ENCODE measurements at regions of chr15 and their contacts with region 1.

Region 1: GRCh38 chr15:101078682-101079323 is 159.6 kb downstream of the LRRK1 start:
- DNase-seq: no peak
- H3K4me3 ChIP-seq: no peak overlapping the region
- H3K27ac ChIP-seq: no peak overlapping the region
- H3K4me1 ChIP-seq: no peaks in the 10 kb centered on the region
- H3K27me3 ChIP-seq: no peaks in the 10 kb centered on the region
- CTCF ChIP-seq: no peak

Region 2: GRCh38 chr15:100438570-100438969 is 640.2 kb before region 1 on chr15:
- CTCF ChIA-PET with region 1: no interaction called
- dilution Hi-C with region 1: loop called (anchors 5 kb)
- in situ Hi-C with region 1: no loop called
- intact Hi-C with region 1: loop called (anchors 10 kb)
- DNase-seq: peak; percentile 58
- H3K4me3 ChIP-seq: no peak overlapping the region
- H3K27ac ChIP-seq: no peak overlapping the region
- H3K4me1 ChIP-seq: no peaks in the 10 kb centered on the region
- H3K27me3 ChIP-seq: no peaks in the 10 kb centered on the region
- CTCF ChIP-seq: no peak

Region 3: DNA sequence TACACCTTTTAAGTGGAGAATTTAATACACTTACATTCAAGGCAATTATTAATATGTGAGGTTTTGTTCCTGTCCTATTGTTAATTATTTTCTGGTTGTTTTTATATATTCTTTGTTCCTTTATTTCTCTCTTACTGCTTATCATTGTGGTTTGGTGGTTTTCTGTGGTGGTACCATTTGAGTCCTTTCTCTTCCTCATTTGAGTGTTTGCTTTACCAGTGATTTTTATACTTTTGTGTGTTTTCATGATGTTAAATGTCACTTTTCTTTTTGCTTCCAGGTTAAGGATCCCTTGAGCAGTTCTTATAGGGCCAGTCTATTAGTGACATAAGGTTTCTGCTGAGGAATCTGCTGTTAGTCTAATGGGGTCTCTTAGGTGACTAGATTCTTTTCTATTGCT is 43.2 kb before region 1 on chr15:
- CTCF ChIA-PET with region 1: no interaction called
- dilution Hi-C with region 1: no loop called
- in situ Hi-C with region 1: no loop called
- intact Hi-C with region 1: no loop called
- DNase-seq: no peak
- H3K4me3 ChIP-seq: no peak overlapping the region
- H3K27ac ChIP-seq: no peak overlapping the region
- H3K4me1 ChIP-seq: no peaks in the 10 kb centered on the region
- H3K27me3 ChIP-seq: no peaks in the 10 kb centered on the region
- CTCF ChIP-seq: no peak

Region 4: GRCh38 chr15:101156509-101157159 is 77.8 kb after region 1 on chr15:
- CTCF ChIA-PET with region 1: no interaction called
- dilution Hi-C with region 1: no loop called
- in situ Hi-C with region 1: no loop called
- intact Hi-C with region 1: no loop called
- DNase-seq: no peak
- H3K4me3 ChIP-seq: no peak overlapping the region
- H3K27ac ChIP-seq: no peak overlapping the region
- H3K4me1 ChIP-seq: no peaks in the 10 kb centered on the region
- H3K27me3 ChIP-seq: no peaks in the 10 kb centered on the region
- CTCF ChIP-seq: no peak

Measured in mammary epithelial cell (primary cell).